ENCODE measurements at regions of chr1 and their contacts with region 1.

Region 1: GRCh38 chr1:54987919-54988705 is 7.7 kb downstream of the TMEM61 start:
- DNase-seq: no peak
- ATAC-seq: no peak
- H3K4me3 Mint-ChIP-seq: no peak overlapping the region
- H3K27ac Mint-ChIP-seq: no peak overlapping the region
- H3K4me1 Mint-ChIP-seq: peaks cover 12% of the 10 kb centered on the region
- H3K27me3 Mint-ChIP-seq: no peaks in the 10 kb centered on the region
- CTCF ChIP-seq: no peak

Region 2: DNA sequence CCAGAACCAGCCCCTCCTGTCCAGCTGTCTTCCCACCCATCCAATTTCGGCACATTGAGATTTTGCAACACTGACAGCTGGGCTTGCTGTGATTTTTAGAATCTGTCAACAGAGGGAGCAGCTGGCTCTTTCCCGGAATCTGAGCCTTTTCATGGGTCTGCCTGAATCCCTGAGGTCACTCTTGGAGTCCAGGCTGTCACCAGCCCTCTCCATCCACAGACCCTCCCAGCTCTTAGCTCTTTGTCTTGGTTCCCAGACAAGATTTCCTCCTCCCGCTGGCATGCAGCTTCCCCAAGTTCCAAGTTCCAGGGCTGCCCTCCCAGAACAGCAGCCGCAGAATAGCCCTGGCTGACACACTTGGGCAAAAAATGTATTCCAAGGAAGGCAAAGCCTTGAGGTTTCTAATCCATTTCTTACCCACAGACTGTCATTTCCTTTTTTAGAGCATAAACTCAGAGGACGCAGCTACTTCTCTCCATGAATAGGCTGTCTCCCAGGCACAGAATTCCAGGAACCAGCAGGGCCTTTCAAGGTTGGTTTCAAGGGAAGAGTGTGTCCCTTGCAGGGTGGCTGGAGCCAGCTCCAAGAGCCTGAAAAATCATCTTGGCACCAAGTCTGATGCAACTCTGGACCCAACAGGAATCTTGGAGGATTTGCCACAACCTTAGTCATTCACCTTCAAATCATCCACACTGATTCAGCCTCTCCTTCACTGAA is 14.7 kb before region 1 on chr1:
- CTCF ChIA-PET with region 1: interaction called, 12 read pairs
- POLR2A ChIA-PET with region 1: no interaction called
- DNase-seq: no peak
- ATAC-seq: peak; percentile 90
- H3K4me3 Mint-ChIP-seq: no peak overlapping the region
- H3K27ac Mint-ChIP-seq: no peak overlapping the region
- H3K4me1 Mint-ChIP-seq: peaks cover 20% of the 10 kb centered on the region
- H3K27me3 Mint-ChIP-seq: peaks cover 6% of the 10 kb centered on the region
- CTCF ChIP-seq: no peak